ENCODE measurements at regions of chr6 and their contacts with region 1.

Region 1: DNA sequence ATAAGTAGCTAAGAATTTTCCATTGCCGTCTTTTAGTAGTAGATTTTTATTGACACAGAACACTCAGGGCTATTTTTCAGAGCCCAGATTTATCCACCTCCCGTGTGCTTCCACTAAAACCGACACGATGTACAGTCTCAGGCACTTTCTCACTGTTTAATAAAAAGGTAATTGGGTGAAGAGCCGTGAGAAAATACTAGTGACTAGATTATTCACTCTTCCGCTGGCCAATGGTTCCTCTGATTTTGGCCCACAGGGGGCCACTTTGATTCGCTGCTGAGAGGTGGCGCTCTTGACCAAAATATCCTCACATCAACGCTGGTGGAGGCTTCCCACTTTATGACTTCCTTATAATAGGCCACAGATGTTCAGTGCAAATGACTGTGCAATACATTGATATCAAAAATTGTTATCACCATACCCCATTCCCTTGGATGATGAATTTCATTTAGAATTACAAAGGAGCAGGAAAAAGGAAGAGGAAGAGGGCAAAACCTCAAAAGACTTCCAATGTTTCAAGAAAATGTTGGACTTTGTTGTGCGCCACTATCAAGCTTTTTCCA is 12.3 kb upstream of the HDDC2 start:
- DNase-seq: peak; percentile 51 to 74
- ATAC-seq: peak; percentile 80 to 94 (median 93)
- H3K4me3 ChIP-seq: no peak overlapping the region
- H3K27ac ChIP-seq: peak overlapping the region in 2 of 10 donors; percentile 10 to 41
- H3K4me1 ChIP-seq: peaks cover 0 to 16% (median 0%) of the 10 kb centered on the region in 9 donors
- H3K27me3 ChIP-seq: peaks cover 0 to 23% (median 0%) of the 10 kb centered on the region in 7 donors
- CTCF ChIP-seq: peak; percentile 76 to 94 (median 87)

Region 2: GRCh38 chr6:124870611-124871459 is 443.3 kb before region 1 on chr6:
- intact Hi-C with region 1: loop called in 2 of 10 experiments (anchors 5 to 10 kb)
- DNase-seq: no peak
- ATAC-seq: no peak
- H3K4me3 ChIP-seq: no peak overlapping the region
- H3K27ac ChIP-seq: no peak overlapping the region
- H3K4me1 ChIP-seq: no peaks in the 10 kb centered on the region
- H3K27me3 ChIP-seq: no peaks in the 10 kb centered on the region
- CTCF ChIP-seq: peak; percentile 44 to 87 (median 77)

Region 3: DNA sequence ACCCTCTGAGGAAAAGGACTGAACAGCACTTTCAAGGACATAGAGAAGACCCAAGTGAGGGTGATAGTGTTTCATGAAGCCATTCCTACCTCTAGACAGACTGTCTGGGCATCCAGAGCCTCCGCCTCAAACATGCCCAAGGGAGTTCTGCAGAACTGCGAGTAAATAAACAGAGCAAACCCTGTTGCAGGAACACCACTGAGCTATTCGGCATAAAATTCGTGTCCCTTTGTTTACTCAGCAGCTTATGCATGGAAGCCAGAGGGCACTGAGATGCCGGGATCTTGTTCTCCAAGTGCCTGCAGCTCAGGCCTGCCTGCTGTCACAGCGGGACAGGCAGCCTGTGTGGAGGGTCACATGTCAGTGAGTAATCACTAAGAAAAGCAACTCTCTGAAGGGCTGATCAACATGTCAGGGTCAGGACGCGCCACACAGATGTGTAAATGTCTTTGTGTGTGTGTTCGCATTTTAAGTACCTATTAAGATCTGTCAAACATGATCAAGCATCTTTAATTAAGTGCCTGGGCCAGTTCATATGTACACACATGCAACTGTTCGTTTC is 270.4 kb after region 1 on chr6:
- intact Hi-C with region 1: loop called in 1 of 10 experiments (anchors 10 kb)
- DNase-seq: peak; percentile 44 to 60
- ATAC-seq: peak; percentile 81 to 97 (median 93)
- H3K4me3 ChIP-seq: no peak overlapping the region
- H3K27ac ChIP-seq: peak overlapping the region in 9 of 10 donors; percentile 45 to 77 (median 58)
- H3K4me1 ChIP-seq: peaks cover 0 to 30% (median 4%) of the 10 kb centered on the region in 9 donors
- H3K27me3 ChIP-seq: peaks cover 0 to 3% (median 0%) of the 10 kb centered on the region in 7 donors
- CTCF ChIP-seq: peak in 5 of 9 donors; percentile 11 to 57 (median 46)

Region 4: DNA sequence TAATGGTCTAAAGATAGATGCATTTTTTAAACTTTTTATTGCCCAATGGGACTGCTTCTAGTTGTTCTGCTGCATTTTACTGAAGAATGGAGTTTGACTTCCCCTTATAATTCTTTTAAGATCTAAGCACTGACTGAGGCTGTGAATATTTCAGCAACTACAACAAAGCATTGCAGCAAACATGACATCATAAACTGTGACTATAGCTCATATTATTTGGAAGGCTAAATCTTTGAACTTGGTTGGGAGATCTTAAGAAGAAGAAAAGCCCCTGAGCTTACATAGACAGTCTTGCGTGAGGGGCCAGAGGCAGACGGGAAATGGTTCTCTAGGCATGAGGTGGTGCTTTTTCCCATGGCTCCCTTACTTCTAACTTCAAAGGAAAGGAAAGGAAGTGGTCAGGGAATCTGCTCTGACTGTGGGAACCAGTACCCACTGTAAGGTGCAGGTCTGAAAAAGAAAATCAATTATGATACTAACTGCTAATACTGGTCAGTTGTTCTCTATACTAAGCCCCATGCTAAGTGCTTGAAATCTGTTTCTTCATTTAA is 450.1 kb after region 1 on chr6:
- intact Hi-C with region 1: loop called (anchors 1 to 5 kb)
- DNase-seq: no peak
- ATAC-seq: no peak
- H3K4me3 ChIP-seq: no peak overlapping the region
- H3K27ac ChIP-seq: peak overlapping the region in 2 of 10 donors; percentile 10 to 19
- H3K4me1 ChIP-seq: peaks cover 0 to 49% (median 9%) of the 10 kb centered on the region in 9 donors
- H3K27me3 ChIP-seq: peaks cover 0 to 11% (median 0%) of the 10 kb centered on the region in 7 donors
- CTCF ChIP-seq: no peak

Region 5: DNA sequence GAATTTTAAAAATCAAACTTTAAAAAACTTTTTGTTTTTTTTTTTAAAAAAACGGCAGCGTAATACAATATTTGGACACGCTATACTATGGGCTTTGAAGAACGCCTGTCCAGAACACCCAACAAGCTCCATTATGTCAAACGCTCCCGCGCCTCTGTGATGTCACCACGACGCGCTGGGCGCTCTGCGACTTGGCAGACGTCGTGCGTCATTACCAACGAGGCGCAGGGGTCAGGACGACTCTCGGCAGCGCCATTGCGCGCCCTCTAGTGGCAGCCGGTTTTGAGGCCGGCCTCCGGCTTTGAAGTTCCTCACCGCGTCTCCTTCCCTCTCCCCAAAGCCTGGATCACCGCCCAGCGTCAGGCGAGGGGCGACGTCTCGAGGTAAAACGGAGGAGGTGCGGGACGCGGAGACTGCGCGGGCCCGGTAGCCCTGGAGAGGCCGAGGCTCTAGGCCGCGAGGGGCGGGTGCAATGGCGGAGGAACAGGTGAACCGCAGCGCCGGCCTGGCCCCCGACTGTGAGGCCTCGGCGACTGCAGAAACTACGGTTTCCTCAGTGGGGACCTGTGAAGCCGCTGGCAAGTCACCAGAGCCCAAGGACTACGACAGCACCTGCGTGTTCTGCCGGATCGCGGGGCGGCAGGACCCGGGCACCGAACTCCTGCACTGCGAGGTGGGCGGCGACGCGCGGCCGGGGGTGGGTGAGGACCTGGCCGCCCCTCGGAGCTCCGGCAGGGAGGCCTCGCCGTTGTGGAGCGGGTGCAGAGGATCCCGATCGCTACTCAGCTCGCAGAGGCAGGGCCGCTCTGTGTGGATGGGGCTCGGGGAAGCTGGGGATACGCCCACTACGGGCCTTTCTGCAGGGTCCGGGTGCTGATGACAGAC is 642.6 kb after region 1 on chr6 and contains the start of gene HINT3:
- intact Hi-C with region 1: loop called in 3 of 10 experiments (anchors 5 to 10 kb)
- DNase-seq: peak; percentile 98 to 99
- ATAC-seq: peak; percentile 97 to 98 (median 98)
- H3K4me3 ChIP-seq: peak within 1 kb of the TSS; percentile 70 to 100 (median 84)
- H3K27ac ChIP-seq: peak within 1 kb of the TSS; percentile 85 to 97 (median 94)
- H3K4me1 ChIP-seq: peaks cover 0 to 30% (median 24%) of the 10 kb centered on the region in 9 donors
- H3K27me3 ChIP-seq: no peaks in the 10 kb centered on the region
- CTCF ChIP-seq: peak; percentile 94 to 100 (median 99)
- total RNA-seq, gene HINT3: 29.8 to 41.6 (median 33.8) TPM

Region 6: GRCh38 chr6:125974214-125974866 is 660.2 kb after region 1 on chr6:
- intact Hi-C with region 1: loop called in 8 of 10 experiments (anchors 5 to 10 kb)
- DNase-seq: no peak
- ATAC-seq: peak in 3 of 8 donors; percentile 47 to 67 (median 51)
- H3K4me3 ChIP-seq: no peak overlapping the region
- H3K27ac ChIP-seq: no peak overlapping the region
- H3K4me1 ChIP-seq: no peaks in the 10 kb centered on the region
- H3K27me3 ChIP-seq: no peaks in the 10 kb centered on the region
- CTCF ChIP-seq: peak in 8 of 9 donors; percentile 29 to 74 (median 62)